ENCODE measurements at regions of chr6 and their contacts with region 1.

Region 1: DNA sequence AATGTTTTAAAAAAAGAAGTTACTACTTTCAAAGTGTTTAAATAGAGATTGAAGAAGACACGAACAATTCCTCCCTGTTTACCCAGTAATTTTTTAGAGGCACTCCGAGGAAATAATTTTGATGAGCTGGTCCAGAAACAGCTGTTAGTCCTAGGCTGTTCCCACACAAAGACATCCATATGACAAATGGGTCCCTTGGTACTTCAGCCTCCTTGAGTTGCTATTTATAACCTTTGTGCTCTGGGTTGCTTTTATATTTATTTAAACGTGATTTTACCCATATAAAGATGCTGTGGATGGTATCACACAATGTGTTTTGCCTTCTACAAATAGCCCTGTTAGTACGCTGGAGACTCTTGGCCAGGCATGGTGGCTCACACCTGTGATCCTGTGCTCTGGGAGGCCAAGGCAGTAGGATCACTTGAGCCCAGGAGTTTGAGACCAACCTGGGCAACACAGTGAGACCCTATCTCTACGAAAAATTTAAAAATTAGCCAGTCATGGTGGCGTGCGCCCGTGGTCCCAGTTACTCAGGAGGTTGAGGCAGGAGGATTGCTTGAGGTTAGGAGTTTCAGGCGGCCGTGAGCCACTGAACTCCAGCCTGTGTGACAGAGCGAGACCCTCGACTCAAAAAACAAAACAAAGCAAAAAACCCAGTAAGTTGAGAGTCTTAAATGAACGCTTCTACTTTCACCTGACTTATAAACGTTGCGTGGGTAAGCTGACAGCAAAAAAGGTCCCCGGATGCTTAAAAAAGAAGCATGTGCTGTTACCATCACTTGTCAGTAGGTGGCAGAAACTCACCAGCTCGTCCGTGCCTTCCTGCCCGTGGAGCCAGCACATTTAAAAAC is 56.9 kb upstream of the ARMH2 start:
- DNase-seq: peak; percentile 69 to 90
- H3K4me3 ChIP-seq: no peak overlapping the region
- H3K27ac ChIP-seq: peak overlapping the region in 3 of 5 donors; percentile 14 to 65 (median 45)
- H3K4me1 ChIP-seq: peaks cover 11 to 38% (median 23%) of the 10 kb centered on the region in 4 donors
- H3K27me3 ChIP-seq: no peaks in the 10 kb centered on the region
- CTCF ChIP-seq: peak in 5 of 7 experiments; percentile 62 to 96 (median 81)
- EP300 ChIP-seq: no peak
- POLR2A ChIP-seq: no peak

Region 2: GRCh38 chr6:24574809-24575208 is 280.8 kb before region 1 on chr6:
- intact Hi-C with region 1: no loop called
- DNase-seq: no peak
- H3K4me3 ChIP-seq: no peak overlapping the region
- H3K27ac ChIP-seq: no peak overlapping the region
- H3K4me1 ChIP-seq: no peaks in the 10 kb centered on the region
- H3K27me3 ChIP-seq: no peaks in the 10 kb centered on the region
- CTCF ChIP-seq: no peak
- EP300 ChIP-seq: no peak
- POLR2A ChIP-seq: no peak

Region 3: GRCh38 chr6:24980507-24981387 is 125.1 kb after region 1 on chr6:
- intact Hi-C with region 1: no loop called
- DNase-seq: peak in 1 of 2 donors; percentile 58
- H3K4me3 ChIP-seq: no peak overlapping the region
- H3K27ac ChIP-seq: peak overlapping the region; percentile 65 to 90 (median 76)
- H3K4me1 ChIP-seq: peaks cover 0 to 37% (median 26%) of the 10 kb centered on the region in 4 donors
- H3K27me3 ChIP-seq: no peaks in the 10 kb centered on the region
- CTCF ChIP-seq: no peak
- EP300 ChIP-seq: no peak
- POLR2A ChIP-seq: no peak

Region 4: DNA sequence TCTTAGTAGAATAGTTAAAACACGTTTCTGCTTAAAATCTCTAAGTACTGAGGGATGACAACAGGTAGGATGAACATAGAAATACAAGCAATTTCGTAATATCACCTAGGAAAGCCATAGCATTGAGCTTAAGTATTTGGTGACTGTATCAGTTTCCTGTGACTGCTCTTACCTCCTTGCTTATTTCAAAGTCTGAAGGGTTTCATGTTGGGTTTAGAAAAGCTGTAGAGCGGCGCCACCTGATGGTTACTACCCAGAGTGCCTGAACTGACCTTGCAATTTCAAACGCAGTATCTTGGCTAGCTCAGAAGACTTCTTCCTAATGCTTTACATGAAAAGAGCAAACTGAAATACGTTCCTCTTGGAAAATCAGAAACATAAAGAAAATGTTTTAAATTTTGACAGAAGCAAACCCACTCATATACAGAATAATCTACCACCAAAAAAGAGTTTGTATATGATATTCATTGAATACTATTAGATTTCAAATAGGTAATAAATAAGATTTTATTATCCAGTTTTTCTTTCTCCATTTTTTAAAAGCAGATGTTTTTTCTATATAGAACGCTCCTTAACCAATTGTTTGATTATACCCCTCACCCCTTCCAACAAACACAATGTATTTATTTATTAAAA is 162.4 kb after region 1 on chr6:
- intact Hi-C with region 1: loop called (anchors 10 kb)
- DNase-seq: peak; percentile 84 to 86
- H3K4me3 ChIP-seq: no peak overlapping the region
- H3K27ac ChIP-seq: peak overlapping the region in 1 of 5 donors; percentile 43
- H3K4me1 ChIP-seq: peaks cover 0 to 26% (median 9%) of the 10 kb centered on the region in 4 donors
- H3K27me3 ChIP-seq: no peaks in the 10 kb centered on the region
- CTCF ChIP-seq: peak in 4 of 7 experiments; percentile 39 to 73 (median 62)
- EP300 ChIP-seq: no peak
- POLR2A ChIP-seq: no peak

Region 5: DNA sequence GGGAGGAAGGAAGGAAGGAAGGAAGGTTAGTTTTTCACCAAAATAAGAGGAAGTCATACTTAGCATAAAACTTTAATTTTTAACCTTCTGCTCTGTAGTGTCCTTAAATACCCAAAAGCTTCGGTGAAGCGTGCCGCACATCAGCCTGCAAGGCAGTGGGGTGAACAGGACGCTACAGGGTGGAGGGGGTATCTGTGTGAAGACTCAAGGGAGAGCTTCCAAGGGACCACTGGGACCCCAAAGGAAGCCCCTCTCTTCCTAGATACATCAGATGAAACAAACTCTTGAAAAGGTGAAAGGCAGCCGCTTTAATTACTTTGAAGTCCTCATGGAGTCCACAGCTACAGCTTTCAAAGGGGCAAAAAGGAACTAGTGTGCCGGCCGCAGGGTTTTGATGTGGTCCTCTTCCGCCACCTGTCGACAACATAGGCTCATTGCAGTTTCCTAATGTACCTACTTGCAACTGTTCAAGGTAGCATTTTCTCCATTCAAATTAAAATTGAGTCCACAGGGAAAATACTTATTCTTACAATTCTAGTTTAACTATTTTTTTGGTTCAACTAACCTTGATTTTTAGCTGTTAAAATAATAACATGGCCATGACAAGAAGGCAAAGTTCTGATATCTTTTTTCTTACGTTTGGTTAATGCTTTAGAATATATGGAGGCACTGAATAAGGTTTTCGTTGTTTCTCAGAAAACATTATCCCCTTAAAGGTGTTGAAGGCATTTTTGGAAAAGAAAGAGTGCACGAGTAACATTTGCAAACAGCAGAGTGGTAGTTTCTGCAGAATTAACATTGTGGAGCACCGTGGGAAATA is 215.1 kb after region 1 on chr6:
- intact Hi-C with region 1: loop called (anchors 5 kb)
- DNase-seq: peak; percentile 89 to 94
- H3K4me3 ChIP-seq: no peak overlapping the region
- H3K27ac ChIP-seq: peak overlapping the region in 1 of 5 donors; percentile 3
- H3K4me1 ChIP-seq: peaks cover 0 to 4% (median 2%) of the 10 kb centered on the region in 4 donors
- H3K27me3 ChIP-seq: no peaks in the 10 kb centered on the region
- CTCF ChIP-seq: peak in 5 of 7 experiments; percentile 82 to 94 (median 90)
- EP300 ChIP-seq: no peak
- POLR2A ChIP-seq: no peak

Measured in stomach (tissue), 19 donors.